ENCODE measurements at regions of chr20 and their contacts with region 1.

Region 1: DNA sequence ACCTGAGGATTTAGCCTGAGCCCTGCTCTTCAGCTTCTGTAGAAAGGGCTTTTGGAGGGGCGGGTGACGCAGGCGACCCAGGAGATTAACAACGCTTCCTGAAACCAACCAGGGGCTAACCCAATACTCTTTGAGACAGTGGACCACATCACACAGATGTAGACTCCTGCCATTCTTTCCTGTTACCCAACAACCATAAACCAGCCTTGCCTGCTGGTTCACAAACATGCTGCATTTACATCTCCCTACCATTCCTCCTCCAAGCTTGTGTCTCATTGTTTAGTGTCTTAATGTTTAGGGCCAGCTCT is 28.3 kb downstream of the PPP1R16B start:
- DNase-seq: no peak
- ATAC-seq: peak; percentile 80
- H3K4me3 Mint-ChIP-seq: peak overlapping the region; percentile 30
- H3K27ac Mint-ChIP-seq: peak overlapping the region; percentile 82
- H3K4me1 Mint-ChIP-seq: peaks cover 76% of the 10 kb centered on the region
- H3K27me3 Mint-ChIP-seq: no peaks in the 10 kb centered on the region
- CTCF ChIP-seq: no peak

Region 2: GRCh38 chr20:38165089-38165989 is 668.5 kb before region 1 on chr20 and contains the start of gene TGM2:
- CTCF ChIA-PET with region 1: no interaction called
- POLR2A ChIA-PET with region 1: no interaction called
- intact Hi-C with region 1: no loop called
- DNase-seq: peak; percentile 74
- ATAC-seq: peak; percentile 94
- H3K4me3 Mint-ChIP-seq: peak within 1 kb of the TSS; percentile 75
- H3K27ac Mint-ChIP-seq: no peak within 1 kb of the TSS
- H3K4me1 Mint-ChIP-seq: peaks cover 29% of the 10 kb centered on the region
- H3K27me3 Mint-ChIP-seq: no peaks in the 10 kb centered on the region
- CTCF ChIP-seq: no peak
- total RNA-seq, gene TGM2: 20.8 and 22.9 TPM in 2 replicates

Region 3: DNA sequence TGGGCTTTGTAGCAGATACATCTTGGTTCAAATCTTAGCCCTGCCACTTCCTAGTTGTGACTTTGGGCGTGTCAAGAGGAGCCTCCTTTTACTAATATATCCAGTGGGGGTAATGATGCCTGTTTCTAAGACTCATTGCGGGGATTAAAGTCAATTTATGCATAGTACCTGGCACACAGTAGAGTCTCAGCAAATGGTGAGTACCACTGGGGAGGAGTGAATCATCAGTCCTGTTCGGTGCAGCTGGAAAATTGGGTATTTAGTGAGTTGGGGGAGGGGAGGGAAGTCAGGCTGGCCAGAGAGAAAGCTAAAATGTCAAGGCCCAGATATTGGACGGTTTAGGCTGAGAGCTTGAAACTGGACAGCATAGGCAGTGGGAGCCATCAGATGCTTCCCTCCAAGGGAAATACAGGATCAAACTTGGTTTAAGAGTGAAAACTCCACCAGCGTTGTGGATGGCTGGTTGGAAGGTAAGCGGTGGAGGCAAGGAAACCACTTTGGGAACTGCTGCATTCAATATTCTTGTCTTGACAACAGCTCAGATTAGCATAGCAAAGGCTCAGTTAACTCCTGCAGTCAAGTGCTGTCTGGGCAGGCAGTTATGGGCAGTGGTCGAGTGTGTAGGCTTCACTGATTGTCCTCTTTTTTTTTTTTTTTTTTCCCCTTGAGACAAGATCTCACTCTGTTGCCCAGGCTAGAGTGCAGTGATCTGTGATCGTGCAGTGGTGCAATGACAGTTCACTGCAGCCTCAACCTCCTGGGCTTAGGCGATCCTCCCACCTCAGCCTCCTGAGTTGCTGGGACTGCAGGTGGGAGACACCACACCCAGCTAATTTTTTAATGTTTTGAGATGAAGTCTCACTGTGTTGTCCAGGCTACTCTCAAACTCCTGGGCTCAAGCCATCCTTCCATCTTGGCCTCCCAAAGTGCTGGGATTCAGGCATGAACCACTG is 15.4 kb before region 1 on chr20:
- CTCF ChIA-PET with region 1: interaction called, 3 read pairs
- POLR2A ChIA-PET with region 1: interaction called, 12 read pairs
- intact Hi-C with region 1: no loop called
- DNase-seq: no peak
- ATAC-seq: no peak
- H3K4me3 Mint-ChIP-seq: no peak overlapping the region
- H3K27ac Mint-ChIP-seq: peak overlapping the region; percentile 85
- H3K4me1 Mint-ChIP-seq: peaks cover 76% of the 10 kb centered on the region
- H3K27me3 Mint-ChIP-seq: no peaks in the 10 kb centered on the region
- CTCF ChIP-seq: no peak

Region 4: DNA sequence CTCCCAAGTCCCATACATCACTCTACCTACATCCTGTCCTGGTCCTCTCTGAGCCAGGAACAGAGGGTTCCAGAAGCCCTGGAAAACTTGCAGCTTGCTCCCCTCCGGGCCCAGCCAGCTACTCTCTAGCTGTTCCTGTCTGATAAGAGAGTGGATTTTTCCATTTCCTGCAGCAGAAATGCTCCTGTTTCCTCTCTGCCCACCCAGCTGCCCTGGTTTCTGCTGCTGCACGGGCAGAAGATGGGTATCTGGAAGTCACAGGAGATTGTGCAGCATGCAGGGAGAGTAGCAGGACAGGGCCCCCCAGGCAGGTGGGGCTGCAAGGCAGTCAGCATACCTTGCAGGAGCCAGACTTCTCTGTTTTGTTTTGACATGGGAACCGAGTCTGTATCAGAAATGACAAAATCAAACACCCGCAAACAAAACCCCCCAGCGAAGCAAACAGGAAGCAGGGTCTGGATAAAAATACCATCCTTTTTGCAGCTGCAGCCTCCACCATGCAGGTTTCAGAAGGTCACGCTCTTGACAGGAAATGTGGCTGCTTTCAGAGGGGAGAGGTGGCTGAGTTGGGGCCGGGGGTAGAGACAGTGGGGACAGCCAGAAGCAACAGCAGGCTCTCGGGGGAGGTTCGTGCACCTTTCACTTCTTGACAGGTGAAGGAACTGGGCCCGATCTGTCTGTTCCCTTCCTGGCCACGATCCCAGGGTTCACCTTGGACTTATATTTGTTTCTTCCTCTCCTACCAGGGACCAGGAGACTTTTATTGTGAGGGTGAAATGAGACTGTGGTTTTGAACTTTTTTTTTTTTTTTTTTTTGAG is 41.6 kb after region 1 on chr20:
- CTCF ChIA-PET with region 1: interaction called, 3 read pairs
- POLR2A ChIA-PET with region 1: interaction called, 10 read pairs
- intact Hi-C with region 1: no loop called
- DNase-seq: peak; percentile 60
- ATAC-seq: peak; percentile 63
- H3K4me3 Mint-ChIP-seq: peak overlapping the region; percentile 83
- H3K27ac Mint-ChIP-seq: peak overlapping the region; percentile 97
- H3K4me1 Mint-ChIP-seq: peaks cover 98% of the 10 kb centered on the region
- H3K27me3 Mint-ChIP-seq: no peaks in the 10 kb centered on the region
- CTCF ChIP-seq: no peak

Region 5: DNA sequence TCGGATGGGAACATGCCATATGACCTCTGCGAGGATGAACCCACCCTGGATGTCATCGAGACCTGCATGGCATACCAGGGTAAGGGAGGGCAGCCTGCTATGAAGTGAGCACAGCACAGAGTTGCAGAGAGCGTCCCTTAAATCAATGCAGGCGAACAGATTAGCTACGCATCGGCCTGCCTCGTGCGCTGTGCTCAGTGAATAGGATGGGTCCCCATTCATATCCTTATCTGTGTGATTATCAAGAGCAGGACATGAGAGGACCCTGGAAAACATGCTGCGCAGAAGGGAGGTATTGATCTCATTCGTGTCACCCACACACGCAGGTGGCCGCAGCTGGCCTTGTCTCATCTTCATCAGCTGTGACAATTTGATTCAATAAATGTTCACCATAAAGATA is 66.8 kb after region 1 on chr20:
- CTCF ChIA-PET with region 1: no interaction called
- POLR2A ChIA-PET with region 1: no interaction called
- intact Hi-C with region 1: no loop called
- DNase-seq: no peak
- ATAC-seq: no peak
- H3K4me3 Mint-ChIP-seq: no peak overlapping the region
- H3K27ac Mint-ChIP-seq: no peak overlapping the region
- H3K4me1 Mint-ChIP-seq: peaks cover 10% of the 10 kb centered on the region
- H3K27me3 Mint-ChIP-seq: no peaks in the 10 kb centered on the region
- CTCF ChIP-seq: no peak